Ascending aorta (tissue), 2 donors: ENCODE measurements at regions of chr11 and their contacts with region 1.

Region 1: GRCh38 chr11:10693509-10694081 is at the start of gene IRAG1:
- DNase-seq: peak in 1 of 2 donors; percentile 92
- H3K4me3 ChIP-seq: peak within 1 kb of the TSS; percentile 66 to 87
- H3K27ac ChIP-seq: peak within 1 kb of the TSS; percentile 99
- H3K4me1 ChIP-seq: peaks cover 15 to 48% of the 10 kb centered on the region in 2 donors
- H3K27me3 ChIP-seq: no peaks in the 10 kb centered on the region
- CTCF ChIP-seq: no peak
- total RNA-seq, gene IRAG1: 236 TPM

Region 2: GRCh38 chr11:10564696-10565318 is 128.8 kb before region 1 on chr11:
- intact Hi-C with region 1: loop called (anchors 5 kb)
- DNase-seq: no peak
- H3K4me3 ChIP-seq: peak overlapping the region in 1 of 2 donors; percentile 10
- H3K27ac ChIP-seq: peak overlapping the region; percentile 78 to 82
- H3K4me1 ChIP-seq: peaks cover 0 to 28% of the 10 kb centered on the region in 2 donors
- H3K27me3 ChIP-seq: no peaks in the 10 kb centered on the region
- CTCF ChIP-seq: peak; percentile 44 to 60 (median 46)

Region 3: DNA sequence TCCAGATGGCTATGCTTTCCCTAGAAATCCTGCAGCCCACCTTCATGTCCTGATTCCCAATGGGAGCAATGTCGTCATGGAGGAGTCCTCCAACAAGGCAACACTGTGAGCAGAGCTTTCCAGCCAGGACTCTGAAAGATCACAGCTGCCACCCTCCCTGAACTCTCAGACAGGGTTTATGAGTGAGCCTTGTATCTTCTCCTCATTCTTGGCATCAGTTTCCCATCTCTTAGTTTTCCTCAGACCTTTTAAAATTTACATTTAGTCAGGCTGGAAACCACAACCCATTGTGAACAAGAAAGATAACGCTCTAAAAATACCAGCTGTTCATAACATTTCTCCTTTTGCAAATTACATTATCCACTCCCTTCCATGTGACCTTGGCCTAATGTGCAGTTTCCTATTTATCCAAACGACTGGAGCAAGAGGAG is 109.5 kb before region 1 on chr11:
- intact Hi-C with region 1: loop called (anchors 1 kb)
- DNase-seq: peak in 1 of 2 donors; percentile 55
- H3K4me3 ChIP-seq: no peak overlapping the region
- H3K27ac ChIP-seq: peak overlapping the region; percentile 94
- H3K4me1 ChIP-seq: peaks cover 6 to 55% of the 10 kb centered on the region in 2 donors
- H3K27me3 ChIP-seq: no peaks in the 10 kb centered on the region
- CTCF ChIP-seq: no peak

Region 4: GRCh38 chr11:10623797-10624761 is 69.5 kb before region 1 on chr11:
- intact Hi-C with region 1: loop called (anchors 1 kb)
- DNase-seq: peak in 1 of 2 donors; percentile 85
- H3K4me3 ChIP-seq: no peak overlapping the region
- H3K27ac ChIP-seq: peak overlapping the region; percentile 82 to 97
- H3K4me1 ChIP-seq: peaks cover 32 to 46% of the 10 kb centered on the region in 2 donors
- H3K27me3 ChIP-seq: no peaks in the 10 kb centered on the region
- CTCF ChIP-seq: peak; percentile 39 to 46 (median 40)

Region 5: GRCh38 chr11:10657308-10658271 is 36.0 kb before region 1 on chr11:
- intact Hi-C with region 1: loop called (anchors 2 kb)
- DNase-seq: no peak
- H3K4me3 ChIP-seq: peak overlapping the region; percentile 32 to 45
- H3K27ac ChIP-seq: peak overlapping the region; percentile 88 to 93
- H3K4me1 ChIP-seq: peaks cover 38 to 96% of the 10 kb centered on the region in 2 donors
- H3K27me3 ChIP-seq: no peaks in the 10 kb centered on the region
- CTCF ChIP-seq: no peak

Region 6: GRCh38 chr11:10674911-10675440 is 18.6 kb before region 1 on chr11:
- intact Hi-C with region 1: loop called (anchors 1 kb)
- DNase-seq: peak; percentile 51 to 92
- H3K4me3 ChIP-seq: peak overlapping the region; percentile 15 to 42
- H3K27ac ChIP-seq: peak overlapping the region; percentile 88 to 93
- H3K4me1 ChIP-seq: peaks cover 8 to 74% of the 10 kb centered on the region in 2 donors
- H3K27me3 ChIP-seq: no peaks in the 10 kb centered on the region
- CTCF ChIP-seq: no peak

Region 7: DNA sequence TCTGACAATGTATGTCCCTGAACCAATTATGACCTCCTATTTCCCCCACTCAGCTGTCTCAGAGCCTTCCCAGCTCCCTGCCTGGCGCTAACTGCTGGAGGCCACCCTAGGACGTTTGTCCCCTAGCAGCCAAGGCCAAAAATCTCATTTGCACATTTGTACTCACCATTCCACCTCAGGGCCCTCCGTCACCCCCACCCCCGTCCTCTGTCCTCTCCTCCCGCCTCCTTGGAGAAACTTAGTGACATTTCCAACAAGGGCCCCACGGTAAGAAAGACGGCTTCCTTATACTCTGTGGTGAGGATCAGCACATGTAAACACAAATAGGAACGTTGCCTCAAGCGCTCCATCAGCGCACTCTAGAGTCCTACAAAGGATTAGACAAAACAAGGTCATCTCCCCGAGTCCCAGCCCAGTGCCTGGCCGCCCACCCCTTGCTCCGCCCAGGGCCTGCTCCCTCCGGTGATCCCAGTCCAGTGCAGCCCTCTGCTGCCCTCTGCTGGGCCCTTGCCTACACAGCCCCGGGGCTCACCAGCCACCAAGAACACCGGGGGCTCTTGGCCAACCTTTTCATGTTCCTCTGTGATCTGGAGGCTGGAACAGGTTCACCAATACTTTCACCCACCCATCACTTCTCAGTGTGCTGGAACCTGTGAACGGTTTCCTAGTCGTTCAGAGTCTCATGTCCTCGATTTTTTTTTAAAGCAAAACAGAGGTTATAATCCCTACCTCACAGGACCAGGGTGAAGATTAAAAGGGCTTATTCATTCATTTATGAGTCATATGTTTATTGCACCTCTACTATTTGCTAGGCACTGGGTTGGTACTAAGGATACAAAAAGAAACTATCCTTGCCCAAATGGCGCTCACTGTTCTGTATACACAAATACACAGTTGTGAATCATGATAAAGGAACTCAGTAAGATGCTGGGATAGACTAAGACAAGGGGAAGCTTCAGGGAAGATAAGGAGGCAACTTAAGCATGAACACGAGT is 42.2 kb after region 1 on chr11:
- intact Hi-C with region 1: loop called (anchors 1 kb)
- DNase-seq: peak; percentile 81 to 98
- H3K4me3 ChIP-seq: peak overlapping the region; percentile 29 to 44
- H3K27ac ChIP-seq: peak overlapping the region; percentile 75 to 84
- H3K4me1 ChIP-seq: peaks cover 0 to 25% of the 10 kb centered on the region in 2 donors
- H3K27me3 ChIP-seq: no peaks in the 10 kb centered on the region
- CTCF ChIP-seq: peak; percentile 99

Region 8: DNA sequence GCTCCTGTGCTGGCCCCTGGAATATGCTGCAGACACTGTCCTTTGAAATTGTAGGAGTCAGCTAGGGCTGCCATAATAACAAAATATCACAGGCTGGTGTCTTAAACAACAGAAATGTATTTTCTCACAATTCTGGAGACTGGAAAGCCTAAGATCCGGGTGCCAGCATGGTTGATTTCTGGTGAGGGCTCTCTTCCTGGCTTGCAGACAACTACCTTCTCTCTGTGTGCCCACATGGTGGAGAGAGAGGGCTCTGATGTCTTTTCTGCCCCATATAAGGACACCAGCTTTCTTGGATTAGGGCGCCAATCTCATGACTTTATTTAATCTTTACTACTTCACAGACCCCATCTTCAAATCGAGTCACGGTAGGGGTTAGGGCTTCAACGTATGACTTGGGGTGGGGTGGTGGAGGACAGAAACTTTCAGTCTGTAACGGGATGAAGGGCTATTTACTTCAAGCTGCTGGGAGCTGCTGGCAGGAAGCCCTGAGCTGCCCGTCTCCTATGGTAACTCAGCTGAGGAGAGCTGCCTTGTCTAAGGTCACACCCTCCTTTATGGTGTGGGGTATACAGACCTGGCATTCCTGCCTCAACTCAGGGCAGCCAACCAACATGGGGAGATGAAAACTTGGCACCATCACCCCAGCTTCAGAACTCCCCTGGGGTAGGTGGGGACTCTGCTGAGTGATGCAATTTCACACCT is 307.1 kb after region 1 on chr11:
- intact Hi-C with region 1: no loop called
- DNase-seq: no peak
- H3K4me3 ChIP-seq: no peak overlapping the region
- H3K27ac ChIP-seq: no peak overlapping the region
- H3K4me1 ChIP-seq: no peaks in the 10 kb centered on the region
- H3K27me3 ChIP-seq: no peaks in the 10 kb centered on the region
- CTCF ChIP-seq: no peak